ENCODE measurements at regions of chr3 and their contacts with region 1.

Region 1: GRCh38 chr3:171829841-171830517 is 13.2 kb upstream of the TMEM212 start:
- ATAC-seq: peak; percentile 87 to 99 (median 95)
- H3K4me3 ChIP-seq: no peak overlapping the region
- H3K27ac ChIP-seq: no peak overlapping the region
- H3K4me1 ChIP-seq: peaks cover 5 to 6% of the 10 kb centered on the region in 2 donors

Region 2: DNA sequence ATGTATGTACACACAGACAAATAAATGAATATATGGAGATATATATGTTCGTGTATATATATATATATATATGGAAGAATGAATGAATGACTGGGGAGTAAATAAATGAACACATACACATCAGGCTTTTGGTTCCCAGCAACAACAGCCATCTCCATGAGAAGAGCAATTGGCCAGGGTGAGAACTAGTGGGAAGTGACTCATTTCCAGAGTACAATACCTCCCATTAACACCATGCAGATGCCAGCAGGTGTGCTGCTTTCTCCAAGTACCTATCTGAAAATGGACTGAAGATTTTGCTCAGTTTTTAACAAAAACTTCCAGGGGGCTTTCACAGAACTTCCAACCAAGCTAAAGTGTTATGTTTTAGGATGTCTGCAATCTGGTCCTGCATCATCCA is 623.7 kb before region 1 on chr3:
- in situ Hi-C with region 1: no loop called
- ATAC-seq: no peak
- H3K4me3 ChIP-seq: no peak overlapping the region
- H3K27ac ChIP-seq: no peak overlapping the region
- H3K4me1 ChIP-seq: no peaks in the 10 kb centered on the region

Region 3: GRCh38 chr3:171676601-171677175 is 153.3 kb before region 1 on chr3:
- in situ Hi-C with region 1: no loop called
- ATAC-seq: no peak
- H3K4me3 ChIP-seq: no peak overlapping the region
- H3K27ac ChIP-seq: no peak overlapping the region
- H3K4me1 ChIP-seq: peaks cover 0 to 2% of the 10 kb centered on the region in 2 donors

Region 4: DNA sequence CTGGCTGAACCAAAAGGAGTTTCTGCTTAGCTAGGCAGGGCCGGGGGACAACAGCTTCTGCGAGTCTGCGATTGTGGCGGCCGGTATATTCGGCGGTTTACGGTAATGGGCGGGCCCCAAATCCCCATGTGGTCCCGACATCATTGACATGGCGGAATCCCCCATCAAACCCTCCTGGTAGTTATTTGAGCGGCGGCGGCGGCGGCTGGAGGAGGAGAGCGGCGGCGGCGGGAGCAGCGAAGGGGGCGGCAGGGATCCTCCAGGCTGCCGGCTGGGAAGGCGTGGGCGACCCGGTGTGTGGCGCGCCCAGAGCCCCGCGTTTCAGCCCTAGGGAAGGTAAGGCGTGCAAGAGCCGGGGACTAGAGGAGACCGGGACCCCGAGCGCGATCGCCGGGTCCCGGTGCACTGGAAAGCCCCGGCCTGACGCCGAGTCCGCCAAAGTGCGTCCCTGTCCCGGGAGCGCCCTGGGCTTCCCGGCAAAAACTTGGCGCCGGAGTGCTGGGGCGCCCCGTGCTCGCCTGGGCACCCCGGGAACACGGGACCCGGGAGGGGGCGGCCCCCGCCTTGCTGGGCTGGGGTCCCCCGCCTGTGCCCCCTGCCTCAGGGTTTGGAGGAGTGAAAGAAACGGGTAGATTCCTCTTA is 209.6 kb after region 1 on chr3 and contains the start of gene FNDC3B:
- in situ Hi-C with region 1: loop called in 1 of 9 experiments (anchors 25 kb)
- ATAC-seq: peak; percentile 52 to 88 (median 82)
- H3K4me3 ChIP-seq: peak within 1 kb of the TSS; percentile 82 to 98 (median 96)
- H3K27ac ChIP-seq: peak within 1 kb of the TSS; percentile 82 to 87
- H3K4me1 ChIP-seq: peaks cover 0 to 4% of the 10 kb centered on the region in 2 donors
- total RNA-seq, gene FNDC3B: 12.4 to 77.0 (median 36.6) TPM